Activated T-helper 1 cell treated with anti-CD3 and anti-CD28 coated beads, Interleukin-12 subunit alpha, Interleukin-12 subunit beta, Interleukin-2, Interleukin-4 antibody, amounts not matched to agents 30 ng/mL and 10 ng/mL and 1 ng/mL, durations not matched to agents 14 hours and 24 hours and 36 hours (primary cell): ENCODE measurements at regions of chr2 and their contacts with region 1.

Region 1: DNA sequence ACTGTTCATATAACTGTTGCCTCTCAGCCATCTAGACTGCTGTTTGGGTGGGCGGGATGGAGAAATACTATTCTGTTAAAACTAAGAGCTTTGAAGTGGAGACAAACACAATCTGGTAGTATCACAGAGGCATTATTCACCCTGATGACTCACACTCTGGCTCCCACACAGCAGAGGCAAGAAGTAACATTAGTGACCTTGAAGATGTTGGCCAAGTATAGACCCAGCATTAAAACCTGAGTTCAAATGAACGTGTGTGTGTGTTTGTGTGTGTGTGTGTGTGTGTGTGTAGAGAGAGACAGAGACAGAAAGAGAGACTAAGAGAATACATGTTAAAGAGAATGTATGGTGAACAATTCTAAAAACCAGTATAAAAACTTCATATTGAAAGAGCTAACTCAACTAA is 22.5 kb upstream of the ACVR1 start:
- DNase-seq: peak; percentile 43
- H3K4me3 Mint-ChIP-seq: peak overlapping the region; percentile 82
- H3K27ac Mint-ChIP-seq: peak overlapping the region; percentile 97
- H3K4me1 Mint-ChIP-seq: peaks cover 79% of the 10 kb centered on the region
- H3K27me3 Mint-ChIP-seq: no peaks in the 10 kb centered on the region

Region 2: GRCh38 chr2:156400706-156401678 is 1497.6 kb before region 1 on chr2:
- intact Hi-C with region 1: loop called (anchors 2 kb)
- DNase-seq: peak; percentile 70
- H3K4me3 Mint-ChIP-seq: peak overlapping the region; percentile 95
- H3K27ac Mint-ChIP-seq: peak overlapping the region; percentile 91
- H3K4me1 Mint-ChIP-seq: peaks cover 37% of the 10 kb centered on the region
- H3K27me3 Mint-ChIP-seq: peaks cover 4% of the 10 kb centered on the region

Region 3: DNA sequence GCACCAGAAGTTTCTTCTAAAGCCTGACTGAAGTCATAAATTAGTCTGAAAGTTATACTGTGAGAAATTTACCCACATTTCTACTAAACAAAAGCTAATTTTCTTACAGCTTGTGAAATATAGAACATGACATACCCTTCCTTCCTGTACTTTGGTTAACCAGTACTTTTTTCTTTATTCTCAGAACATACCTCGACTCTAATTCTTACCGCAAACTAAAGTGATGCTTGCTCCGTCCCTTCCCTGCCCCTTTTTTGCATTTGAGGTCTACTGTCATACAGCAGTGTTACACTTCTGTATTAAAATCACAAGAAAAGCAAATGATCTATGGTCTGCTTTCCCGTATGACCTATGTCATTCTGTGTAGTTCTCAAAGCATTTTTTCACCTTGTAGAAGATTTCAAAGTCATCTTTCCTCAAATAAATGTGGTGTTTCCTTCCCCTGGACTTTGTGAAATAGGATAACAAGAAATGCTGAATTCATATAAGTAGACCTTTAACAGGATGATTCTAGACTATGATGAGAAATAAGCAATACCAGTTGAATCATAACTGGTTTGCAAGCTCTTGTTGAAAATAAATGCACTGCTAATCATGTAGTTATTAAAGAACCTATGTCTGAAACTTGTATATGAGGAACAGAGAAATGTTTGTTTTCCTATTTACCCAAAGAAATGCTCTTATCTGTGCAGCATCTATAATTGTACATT is 485.1 kb before region 1 on chr2:
- intact Hi-C with region 1: loop called (anchors 2 kb)
- DNase-seq: peak; percentile 60
- H3K4me3 Mint-ChIP-seq: peak overlapping the region; percentile 82
- H3K27ac Mint-ChIP-seq: peak overlapping the region; percentile 91
- H3K4me1 Mint-ChIP-seq: peaks cover 84% of the 10 kb centered on the region
- H3K27me3 Mint-ChIP-seq: no peaks in the 10 kb centered on the region

Region 4: DNA sequence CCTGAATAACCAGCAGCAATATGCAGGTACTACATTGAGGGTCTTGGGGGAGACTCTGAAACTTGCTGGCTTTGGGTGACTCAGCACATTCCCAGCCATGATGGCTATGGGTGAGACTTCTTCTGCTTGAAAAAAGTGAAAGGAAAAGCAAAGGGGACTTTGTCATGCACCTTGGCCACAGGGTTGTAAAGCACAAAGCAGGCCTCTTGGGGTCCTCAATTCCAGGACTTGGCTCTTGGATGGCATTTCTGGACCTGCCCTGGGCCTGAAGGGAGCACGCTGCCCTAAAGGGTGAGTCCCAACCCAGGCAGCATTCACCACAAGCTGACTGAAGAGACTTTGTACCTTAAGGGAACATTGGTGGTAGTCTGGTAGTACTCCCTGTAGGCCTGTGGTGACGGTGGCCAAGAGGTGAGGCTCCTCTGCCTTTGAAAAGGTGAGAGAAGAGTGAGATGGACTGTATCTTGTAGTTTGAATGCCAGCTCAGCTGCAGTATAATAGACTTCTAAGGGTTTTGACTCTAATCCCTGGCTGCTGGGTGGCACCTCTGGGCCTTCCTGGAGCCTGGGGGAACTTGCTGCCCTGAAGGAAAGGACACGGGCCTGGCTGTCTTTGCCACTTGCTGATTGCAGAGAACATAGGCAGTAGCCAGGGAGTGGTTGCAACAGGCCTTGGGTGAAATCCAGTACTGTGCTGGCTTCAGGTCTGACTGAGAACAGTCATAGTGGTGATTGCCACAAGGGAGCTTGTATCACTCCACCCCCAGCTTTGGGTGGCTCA is 418.2 kb before region 1 on chr2:
- intact Hi-C with region 1: loop called (anchors 2 kb)
- DNase-seq: peak; percentile 62
- H3K4me3 Mint-ChIP-seq: peak overlapping the region; percentile 83
- H3K27ac Mint-ChIP-seq: peak overlapping the region; percentile 99
- H3K4me1 Mint-ChIP-seq: peaks cover 95% of the 10 kb centered on the region
- H3K27me3 Mint-ChIP-seq: no peaks in the 10 kb centered on the region

Region 5: DNA sequence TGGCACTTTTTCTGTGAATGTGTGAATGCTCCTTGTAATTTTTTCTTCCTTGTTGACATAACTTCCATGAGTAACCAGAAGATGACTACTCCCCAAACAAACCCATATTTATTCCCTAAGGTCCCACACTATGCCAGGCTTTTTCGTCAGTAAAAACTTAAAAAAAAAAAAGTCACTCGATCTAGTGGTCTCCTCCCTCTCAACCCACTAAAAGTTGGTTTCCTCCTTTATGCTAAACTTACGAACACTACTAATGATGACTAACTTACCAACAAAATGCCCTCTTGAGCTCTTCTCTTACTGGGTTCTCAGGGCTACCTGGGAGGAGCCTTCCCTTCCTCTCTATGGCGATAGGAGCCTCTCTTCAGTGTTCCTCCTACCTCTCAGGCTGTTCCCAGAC is 40.7 kb before region 1 on chr2:
- intact Hi-C with region 1: loop called (anchors 1 kb)
- DNase-seq: no peak
- H3K4me3 Mint-ChIP-seq: no peak overlapping the region
- H3K27ac Mint-ChIP-seq: no peak overlapping the region
- H3K4me1 Mint-ChIP-seq: peaks cover 38% of the 10 kb centered on the region
- H3K27me3 Mint-ChIP-seq: no peaks in the 10 kb centered on the region

Region 6: GRCh38 chr2:158142568-158143332 is 244.2 kb after region 1 on chr2:
- intact Hi-C with region 1: no loop called
- DNase-seq: no peak
- H3K4me3 Mint-ChIP-seq: no peak overlapping the region
- H3K27ac Mint-ChIP-seq: no peak overlapping the region
- H3K4me1 Mint-ChIP-seq: no peaks in the 10 kb centered on the region
- H3K27me3 Mint-ChIP-seq: peaks cover 13% of the 10 kb centered on the region

Region 7: GRCh38 chr2:158191076-158191895 is 292.7 kb after region 1 on chr2:
- intact Hi-C with region 1: loop called (anchors 1 kb)
- DNase-seq: peak; percentile 6
- H3K4me3 Mint-ChIP-seq: peak overlapping the region; percentile 50
- H3K27ac Mint-ChIP-seq: peak overlapping the region; percentile 40
- H3K4me1 Mint-ChIP-seq: peaks cover 28% of the 10 kb centered on the region
- H3K27me3 Mint-ChIP-seq: peaks cover 24% of the 10 kb centered on the region